HEK293 (cell line): ENCODE measurements at regions of chr11 and their contacts with region 1.

Region 1: DNA sequence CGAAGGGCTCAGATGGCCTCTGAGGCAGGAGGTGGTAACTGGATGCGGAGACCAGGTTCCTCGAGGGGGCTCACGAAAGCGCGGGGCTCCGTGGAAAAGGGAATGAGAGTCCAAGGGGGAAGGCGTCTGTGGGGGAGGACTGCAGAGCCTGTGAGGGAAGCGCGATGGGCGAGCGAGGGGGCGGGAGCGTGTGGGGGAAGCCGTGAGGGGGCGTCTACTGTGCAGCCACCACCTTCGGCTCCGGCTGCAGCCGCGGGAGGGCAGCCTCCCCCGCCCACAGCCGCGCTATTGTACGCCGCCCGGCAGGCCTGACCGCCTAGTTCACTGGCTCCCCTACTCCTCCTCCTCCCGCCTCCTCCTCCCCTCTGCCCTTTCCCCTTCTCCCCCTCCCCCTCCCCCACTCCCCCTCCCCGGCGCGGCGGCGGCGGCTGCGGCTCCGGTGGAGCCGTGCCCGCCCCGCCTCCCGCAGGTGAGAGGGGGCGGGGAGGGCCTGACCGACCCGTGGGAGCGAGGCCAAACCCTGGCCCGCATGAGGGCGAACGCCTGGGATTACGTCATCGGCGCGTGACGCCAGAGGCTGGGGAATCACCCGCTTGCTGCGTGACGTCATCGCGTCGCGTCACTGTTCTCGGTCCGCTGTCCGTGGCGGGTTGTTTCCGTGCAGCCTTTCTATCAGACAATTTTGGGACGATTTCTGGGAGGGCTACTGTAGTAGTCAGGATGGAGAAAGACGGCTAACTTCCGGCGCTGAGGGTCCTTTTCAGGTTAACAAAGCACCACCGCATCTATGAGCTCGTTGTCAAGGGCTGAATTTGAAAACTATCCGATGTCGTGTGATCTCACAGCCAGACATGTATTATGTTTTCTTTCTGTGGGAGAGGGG is at the start of gene PAK1:
- H3K4me3 ChIP-seq: peak within 1 kb of the TSS; percentile 68
- H3K27ac ChIP-seq: peak within 1 kb of the TSS; percentile 14; the same call in 1 of the 2 replicates
- H3K4me1 ChIP-seq: peaks cover 2% of the 10 kb centered on the region
- CTCF ChIP-seq: peak; percentile 75

Region 2: DNA sequence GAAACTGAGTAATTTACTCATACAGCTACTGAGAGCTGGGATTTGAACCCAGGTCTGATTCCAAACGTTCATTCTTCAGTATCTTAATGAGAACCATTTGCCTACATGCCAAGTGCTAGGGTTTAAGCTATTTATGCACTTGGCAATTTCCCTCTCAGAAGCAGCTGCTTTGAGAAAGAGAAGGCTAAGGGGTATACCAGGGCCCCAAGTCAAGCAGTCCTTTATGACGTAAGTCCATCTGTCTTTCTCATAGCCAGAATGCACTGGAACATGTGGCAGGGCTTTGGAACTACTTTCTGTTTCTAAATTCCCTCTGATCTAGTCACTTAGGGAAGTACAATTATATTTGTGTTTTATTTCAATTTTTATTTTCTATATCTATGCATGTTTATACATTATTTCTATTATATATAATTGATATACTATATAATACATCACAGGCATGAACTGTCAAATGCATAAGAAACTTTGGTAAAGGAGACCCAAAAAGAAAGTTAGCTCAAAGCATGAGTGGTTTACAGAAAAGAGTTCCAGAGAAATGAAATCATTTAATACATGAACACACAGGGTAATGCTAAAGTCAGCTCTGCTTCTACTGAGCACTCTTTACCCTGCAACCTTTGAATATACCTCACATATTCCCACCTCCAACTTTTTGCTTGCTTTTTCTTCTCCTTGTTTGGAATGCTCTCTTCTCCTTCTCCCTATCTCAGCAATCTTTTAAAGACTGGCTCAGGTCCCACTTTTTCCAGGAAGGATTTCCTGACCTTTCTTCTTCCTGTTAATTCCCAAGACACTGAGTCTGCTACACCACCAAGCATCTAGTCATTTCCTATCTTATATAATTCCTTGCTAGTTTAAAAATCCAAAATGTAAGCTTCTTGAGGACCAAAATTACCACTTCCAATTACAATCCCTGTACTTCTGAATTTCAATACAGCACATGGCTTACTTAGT is 92.0 kb before region 1 on chr11:
- CTCF ChIA-PET with region 1: no interaction called
- POLR2A ChIA-PET with region 1: no interaction called
- H3K4me3 ChIP-seq: no peak overlapping the region
- H3K27ac ChIP-seq: no peak overlapping the region
- H3K4me1 ChIP-seq: no peaks in the 10 kb centered on the region
- CTCF ChIP-seq: no peak

Region 3: GRCh38 chr11:77411717-77412441 is 62.2 kb before region 1 on chr11:
- CTCF ChIA-PET with region 1: interaction called, 21 read pairs
- POLR2A ChIA-PET with region 1: no interaction called
- H3K4me3 ChIP-seq: peak overlapping the region; percentile 52
- H3K27ac ChIP-seq: no peak overlapping the region
- H3K4me1 ChIP-seq: 0 out of 2 replicates have a peak, but pooled peaks cover 5% of the 10 kb centered on the region
- CTCF ChIP-seq: no peak

Region 4: DNA sequence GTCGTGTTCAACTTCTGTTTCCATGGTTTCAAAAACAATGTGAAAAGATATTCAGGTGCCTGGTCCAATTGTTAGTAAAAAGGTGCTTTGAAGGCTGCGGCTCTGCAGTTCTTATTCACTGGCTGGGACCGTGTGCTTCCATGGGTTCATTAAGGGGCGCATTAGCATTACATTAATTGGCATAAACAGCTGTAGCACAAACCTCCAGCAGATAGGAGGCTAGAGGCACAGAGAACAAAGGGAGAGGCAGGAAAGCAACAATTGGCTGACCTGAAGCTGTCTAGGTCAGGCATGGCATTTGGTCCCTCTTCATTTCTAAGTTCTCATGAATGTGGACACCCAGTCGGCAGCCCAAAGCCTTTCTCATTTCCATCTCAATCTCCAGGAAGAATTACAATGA is 16.7 kb before region 1 on chr11:
- CTCF ChIA-PET with region 1: interaction called, 24 read pairs
- POLR2A ChIA-PET with region 1: no interaction called
- H3K4me3 ChIP-seq: no peak overlapping the region
- H3K27ac ChIP-seq: no peak overlapping the region
- H3K4me1 ChIP-seq: no peaks in the 10 kb centered on the region; the same call in 1 of the 2 replicates
- CTCF ChIP-seq: no peak

Region 5: GRCh38 chr11:77547863-77548551 is 74.0 kb after region 1 on chr11:
- CTCF ChIA-PET with region 1: interaction called, 34 read pairs
- POLR2A ChIA-PET with region 1: interaction called, 6 read pairs
- H3K4me3 ChIP-seq: no peak overlapping the region
- H3K27ac ChIP-seq: no peak overlapping the region
- H3K4me1 ChIP-seq: no peaks in the 10 kb centered on the region
- CTCF ChIP-seq: no peak